HAP-1 (cell line): ENCODE measurements at regions of chr3 and their contacts with region 1.

Region 1: DNA sequence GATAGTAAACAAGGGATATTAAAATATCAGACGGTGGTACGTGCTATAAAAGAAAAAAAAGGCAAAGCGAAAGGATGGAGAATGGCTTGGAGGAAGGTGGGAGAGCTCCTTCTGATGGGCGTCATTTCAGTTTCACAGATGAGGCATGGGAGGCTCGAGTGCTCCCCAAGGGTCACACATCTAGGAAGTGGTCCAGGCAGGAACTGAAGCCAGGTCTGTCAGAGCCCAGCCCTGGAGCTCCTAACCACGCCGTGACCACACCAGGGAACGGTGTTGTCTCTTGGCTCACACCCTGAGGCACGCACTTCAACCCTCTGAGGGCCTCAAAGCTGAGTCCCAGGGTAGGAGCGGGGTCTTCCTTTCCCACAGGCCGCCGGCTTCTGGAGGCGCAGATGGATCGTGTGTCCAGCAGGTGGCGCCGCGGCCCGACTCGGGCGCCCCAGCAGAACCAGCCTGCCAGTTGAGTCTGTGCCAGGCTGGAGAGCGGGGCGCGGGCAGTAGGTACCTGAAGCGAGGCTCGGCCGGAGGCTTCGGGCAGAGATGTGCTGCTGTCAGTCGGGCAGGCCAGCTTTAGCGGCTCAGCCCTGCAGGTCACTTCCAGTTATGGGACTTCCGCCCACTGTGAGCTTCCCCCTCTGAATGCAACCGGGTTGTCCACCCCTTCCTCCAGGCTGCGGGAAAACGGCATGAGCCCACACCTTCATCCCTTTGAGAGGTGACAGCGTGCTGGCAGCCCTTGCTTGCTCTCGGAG is 68.1 kb downstream of the SLC6A1 start:
- DNase-seq: peak; percentile 20 to 74
- H3K4me3 ChIP-seq: no peak overlapping the region
- H3K4me1 ChIP-seq: no peaks in the 10 kb centered on the region
- H3K27me3 ChIP-seq: peaks cover 5% of the 10 kb centered on the region; the same call in 1 of the 2 replicates

Region 2: DNA sequence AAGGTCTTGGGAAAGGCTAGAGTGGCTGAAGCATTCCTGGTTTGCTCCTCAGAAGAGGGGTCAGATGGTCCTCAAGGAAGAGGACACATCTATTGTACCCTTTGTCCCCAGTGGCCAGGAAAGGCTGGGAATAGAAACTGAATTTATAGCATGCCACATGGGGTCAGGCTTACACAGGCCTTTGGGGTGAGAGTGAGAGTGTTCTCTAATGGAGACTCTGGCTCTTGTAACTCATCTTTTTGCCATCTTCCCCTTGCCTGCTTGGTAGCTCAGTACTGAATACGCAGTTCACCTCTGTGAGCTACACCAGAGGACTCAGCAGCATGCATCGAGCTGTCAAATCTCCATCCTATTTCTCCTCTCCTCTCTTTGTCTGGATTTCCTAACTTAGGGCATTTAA is 642.8 kb before region 1 on chr3:
- in situ Hi-C with region 1: no loop called
- DNase-seq: no peak
- H3K4me3 ChIP-seq: no peak overlapping the region
- H3K4me1 ChIP-seq: no peaks in the 10 kb centered on the region
- H3K27me3 ChIP-seq: no peaks in the 10 kb centered on the region; the same call in 1 of the 2 replicates

Region 3: GRCh38 chr3:10758304-10759061 is 302.2 kb before region 1 on chr3:
- in situ Hi-C with region 1: loop called (anchors 10 kb)
- DNase-seq: peak; percentile 54 to 67
- H3K4me3 ChIP-seq: no peak overlapping the region
- H3K4me1 ChIP-seq: no peaks in the 10 kb centered on the region
- H3K27me3 ChIP-seq: no peaks in the 10 kb centered on the region

Region 4: DNA sequence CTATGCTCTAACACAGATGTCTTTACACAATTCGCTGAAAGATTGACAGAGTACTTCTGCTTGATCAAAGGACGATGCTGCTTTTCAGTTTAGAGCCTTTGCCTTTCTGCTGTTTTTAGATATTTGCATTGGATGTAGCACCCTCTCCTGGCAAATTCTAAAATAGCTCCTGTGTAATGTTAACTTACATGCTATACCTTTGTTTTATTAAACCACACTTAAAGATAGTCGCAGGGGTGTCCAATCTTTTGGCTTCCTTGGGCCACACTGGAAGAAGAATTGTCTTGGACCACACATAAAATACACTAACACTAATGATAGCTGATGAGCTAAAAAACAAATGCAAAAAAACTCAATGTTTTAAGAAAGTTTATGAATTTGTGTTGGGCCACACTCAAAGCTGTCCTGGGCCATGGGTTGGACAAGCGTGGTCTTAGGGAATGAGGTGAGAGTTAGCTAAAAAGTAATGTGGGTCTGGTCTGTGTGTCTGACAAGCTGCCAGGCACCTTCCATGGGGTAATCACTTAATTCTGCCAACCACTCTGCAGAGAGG is 274.5 kb after region 1 on chr3:
- in situ Hi-C with region 1: loop called (anchors 25 kb)
- DNase-seq: peak; percentile 32 to 66
- H3K4me3 ChIP-seq: no peak overlapping the region
- H3K4me1 ChIP-seq: no peaks in the 10 kb centered on the region
- H3K27me3 ChIP-seq: no peaks in the 10 kb centered on the region